OCI-LY7 (cell line): ENCODE measurements at regions of chr2 and their contacts with region 1.

Region 1: GRCh38 chr2:37653805-37654378 is 17.6 kb downstream of the CDC42EP3 start:
- DNase-seq: peak; percentile 82
- H3K4me3 ChIP-seq: peak overlapping the region; percentile 64
- H3K27ac ChIP-seq: peak overlapping the region; percentile 94
- H3K4me1 ChIP-seq: peaks cover 85% of the 10 kb centered on the region
- CTCF ChIP-seq: no peak

Region 2: DNA sequence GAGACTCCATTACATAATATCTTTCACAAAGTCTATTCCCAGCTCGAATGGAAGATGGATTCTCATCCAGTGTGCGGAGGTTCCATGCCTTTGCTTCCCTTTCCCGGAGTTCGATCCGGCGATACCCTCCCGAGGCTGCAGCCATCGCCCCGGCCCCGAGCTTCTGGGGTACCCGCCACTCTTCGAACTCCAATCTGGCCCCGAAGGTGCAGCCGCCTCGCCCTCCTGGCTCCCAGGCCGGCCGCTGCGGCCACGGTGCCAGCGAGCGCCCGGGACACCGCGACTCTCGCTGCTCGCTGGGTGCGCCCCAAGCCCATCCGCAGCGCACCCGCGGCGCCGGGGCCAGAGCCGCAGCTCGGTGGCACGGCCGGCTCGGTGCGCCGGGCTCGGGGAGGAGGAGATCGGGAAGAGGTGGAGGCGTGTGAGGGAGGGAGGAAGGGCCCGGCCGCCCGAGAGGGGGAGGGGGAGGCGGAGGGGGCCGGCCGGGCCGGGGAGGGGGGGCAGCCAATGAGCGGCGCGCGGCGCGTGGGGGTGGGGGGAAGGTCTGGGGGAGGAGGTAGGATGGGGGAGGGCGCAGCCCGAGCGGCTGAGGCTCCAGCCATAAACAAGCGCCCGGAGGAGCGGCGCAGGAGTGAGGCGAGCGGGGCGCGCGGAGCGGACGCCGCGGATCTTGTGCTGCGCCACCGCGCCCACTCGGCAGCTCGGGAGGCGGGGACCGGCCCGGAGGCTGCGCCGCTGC is 1298.6 kb before region 1 on chr2 and contains the start of gene CRIM1:
- CTCF ChIA-PET with region 1: no interaction called
- POLR2A ChIA-PET with region 1: no interaction called
- intact Hi-C with region 1: loop called (anchors 10 kb)
- DNase-seq: peak; percentile 82
- H3K4me3 ChIP-seq: peak within 1 kb of the TSS; percentile 81
- H3K27ac ChIP-seq: peak within 1 kb of the TSS; percentile 70
- H3K4me1 ChIP-seq: peaks cover 53% of the 10 kb centered on the region
- CTCF ChIP-seq: no peak
- total RNA-seq, gene CRIM1: 24.5 and 37.0 TPM in 2 replicates

Region 3: DNA sequence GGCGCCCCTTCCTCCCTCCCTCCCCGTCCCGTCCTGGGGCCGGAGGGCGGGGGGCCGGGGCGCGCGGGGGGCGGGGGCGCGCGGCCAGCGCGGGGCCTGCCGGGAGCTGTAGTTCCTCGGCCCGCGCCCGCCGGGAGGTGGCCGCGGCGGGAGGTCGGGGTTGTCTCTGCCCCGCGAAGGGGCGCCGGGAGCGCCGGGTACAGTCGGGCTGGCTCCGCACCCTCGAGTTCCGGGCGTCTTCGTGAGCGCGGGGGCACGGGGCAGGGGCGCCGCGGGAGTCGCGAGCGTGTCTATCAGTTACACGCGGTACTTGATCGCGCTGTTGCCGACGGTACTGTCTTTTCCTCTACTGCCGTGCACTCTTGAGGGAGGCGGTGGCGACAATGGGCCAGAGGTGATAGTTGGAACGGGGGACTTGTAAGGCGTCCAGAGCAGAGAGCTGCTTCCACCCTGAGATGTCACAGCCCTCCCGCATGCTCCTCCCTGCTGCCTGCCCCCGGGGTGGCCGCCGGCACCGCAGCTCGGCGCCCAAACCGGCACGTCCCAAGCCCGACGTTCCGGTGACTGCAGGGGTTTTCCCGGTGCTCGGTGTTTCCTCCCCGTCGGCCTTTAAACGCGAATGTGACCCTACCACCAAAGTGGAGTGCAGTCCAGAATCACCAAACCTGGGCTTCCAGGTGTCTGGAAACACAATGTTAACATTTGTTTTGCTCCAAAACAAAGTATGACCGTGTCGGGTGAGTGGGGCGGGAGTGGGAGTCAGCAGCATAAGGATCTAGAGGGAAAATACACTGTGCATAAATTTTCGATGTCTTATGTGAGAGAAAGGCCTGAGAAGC is 328.9 kb before region 1 on chr2 and contains the start of gene PRKD3:
- CTCF ChIA-PET with region 1: no interaction called
- POLR2A ChIA-PET with region 1: interaction called, 5 read pairs
- intact Hi-C with region 1: loop called (anchors 2 kb)
- DNase-seq: no peak
- H3K4me3 ChIP-seq: peak within 1 kb of the TSS; percentile 98
- H3K27ac ChIP-seq: peak within 1 kb of the TSS; percentile 81
- H3K4me1 ChIP-seq: peaks cover 40% of the 10 kb centered on the region
- CTCF ChIP-seq: no peak
- total RNA-seq, gene PRKD3: 63.2 and 74.3 TPM in 2 replicates

Region 4: DNA sequence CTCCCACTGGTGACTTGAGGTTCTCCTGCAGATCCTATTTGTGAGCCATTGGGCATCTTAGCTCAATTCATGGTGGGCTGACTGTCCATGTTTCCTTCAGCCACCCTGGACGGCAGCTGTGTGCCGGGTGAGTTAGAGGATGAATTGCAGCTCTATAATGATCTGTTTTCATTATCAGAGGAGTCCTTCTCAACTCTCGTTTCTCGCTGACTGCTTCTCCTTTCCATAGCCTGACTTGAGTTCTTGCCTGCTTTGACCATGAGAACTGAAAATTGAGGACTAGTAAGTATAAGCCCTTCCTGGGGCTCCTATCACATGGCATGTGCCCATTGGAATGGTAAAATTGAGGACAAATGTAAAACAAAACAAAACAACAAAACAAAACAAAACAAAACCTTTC is 104.3 kb before region 1 on chr2:
- CTCF ChIA-PET with region 1: no interaction called
- POLR2A ChIA-PET with region 1: interaction called, 3 read pairs
- intact Hi-C with region 1: loop called (anchors 5 kb)
- DNase-seq: no peak
- H3K4me3 ChIP-seq: no peak overlapping the region
- H3K27ac ChIP-seq: no peak overlapping the region
- H3K4me1 ChIP-seq: peaks cover 13% of the 10 kb centered on the region
- CTCF ChIP-seq: no peak

Region 5: DNA sequence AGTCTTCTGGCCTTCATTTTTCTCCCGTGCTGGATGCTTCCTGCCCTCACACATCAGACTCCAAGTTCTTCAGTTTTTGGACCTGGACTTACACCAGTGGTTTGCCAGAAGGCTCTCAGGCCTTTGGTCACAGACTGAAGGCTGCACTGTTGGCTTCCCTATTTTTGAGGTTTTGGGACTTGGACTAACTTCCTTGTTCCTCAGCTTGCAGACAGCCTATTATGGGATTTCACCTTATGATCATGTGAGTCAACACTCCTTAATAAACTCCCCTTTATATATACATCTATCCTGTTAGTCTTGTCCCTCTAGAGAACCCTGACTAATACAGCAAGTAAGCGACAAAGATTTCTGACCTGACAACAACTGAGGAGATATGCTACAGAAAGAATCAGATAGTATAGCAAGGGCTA is 10.3 kb after region 1 on chr2:
- CTCF ChIA-PET with region 1: interaction called, 4 read pairs
- POLR2A ChIA-PET with region 1: interaction called, 30 read pairs
- intact Hi-C with region 1: no loop called
- DNase-seq: no peak
- H3K4me3 ChIP-seq: no peak overlapping the region
- H3K27ac ChIP-seq: no peak overlapping the region
- H3K4me1 ChIP-seq: peaks cover 32% of the 10 kb centered on the region
- CTCF ChIP-seq: no peak

Region 6: GRCh38 chr2:37851828-37852584 is 198.1 kb after region 1 on chr2:
- CTCF ChIA-PET with region 1: no interaction called
- POLR2A ChIA-PET with region 1: no interaction called
- intact Hi-C with region 1: no loop called
- DNase-seq: no peak
- H3K4me3 ChIP-seq: no peak overlapping the region
- H3K27ac ChIP-seq: no peak overlapping the region
- H3K4me1 ChIP-seq: peaks cover 6% of the 10 kb centered on the region
- CTCF ChIP-seq: no peak

Region 7: GRCh38 chr2:37966326-37966725 is 312.4 kb after region 1 on chr2:
- CTCF ChIA-PET with region 1: interaction called, 13 read pairs
- POLR2A ChIA-PET with region 1: no interaction called
- intact Hi-C with region 1: no loop called
- DNase-seq: no peak
- H3K4me3 ChIP-seq: no peak overlapping the region
- H3K27ac ChIP-seq: no peak overlapping the region
- H3K4me1 ChIP-seq: no peaks in the 10 kb centered on the region
- CTCF ChIP-seq: no peak